Transverse colon (tissue), 4 donors: ENCODE measurements at regions of chr11 and their contacts with region 1.

Region 1: GRCh38 chr11:69654569-69655327 is 13.8 kb downstream of the CCND1 start:
- DNase-seq: no peak
- H3K4me3 ChIP-seq: no peak overlapping the region
- H3K27ac ChIP-seq: no peak overlapping the region
- H3K4me1 ChIP-seq: peaks cover 0 to 5% (median 0%) of the 10 kb centered on the region in 4 donors
- H3K27me3 ChIP-seq: no peaks in the 10 kb centered on the region
- CTCF ChIP-seq: no peak
- EP300 ChIP-seq: no peak
- POLR2A ChIP-seq: no peak

Region 2: GRCh38 chr11:69122642-69123431 is 531.9 kb before region 1 on chr11:
- in situ Hi-C with region 1: loop called in 2 of 4 experiments (anchors 10 to 25 kb)
- intact Hi-C with region 1: no loop called
- DNase-seq: peak; percentile 92
- H3K4me3 ChIP-seq: peak overlapping the region in 1 of 4 donors; percentile 6
- H3K27ac ChIP-seq: peak overlapping the region; percentile 34 to 65 (median 56)
- H3K4me1 ChIP-seq: peaks cover 17 to 20% (median 19%) of the 10 kb centered on the region in 4 donors
- H3K27me3 ChIP-seq: no peaks in the 10 kb centered on the region
- CTCF ChIP-seq: no peak
- EP300 ChIP-seq: peak; percentile 71
- POLR2A ChIP-seq: no peak

Region 3: DNA sequence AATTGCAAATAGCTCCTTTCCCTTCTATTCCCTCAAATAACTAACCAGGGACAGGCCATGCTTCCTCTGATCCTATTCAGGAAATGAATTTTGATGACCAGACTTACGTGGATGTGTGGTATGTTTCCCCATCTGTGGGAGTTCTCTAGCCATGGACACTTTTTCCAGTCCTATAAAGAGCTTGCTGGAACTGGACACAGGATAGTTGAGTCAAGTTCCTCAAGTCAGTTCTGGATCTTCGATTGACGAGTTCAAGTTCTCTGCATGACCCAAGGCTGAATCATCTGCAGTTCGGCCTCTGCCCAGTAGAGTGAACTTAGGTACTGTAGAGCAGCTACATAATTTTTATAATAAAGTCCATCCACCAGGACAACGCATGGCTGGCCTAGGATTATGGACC is 66.5 kb before region 1 on chr11:
- in situ Hi-C with region 1: no loop called
- intact Hi-C with region 1: no loop called
- DNase-seq: no peak
- H3K4me3 ChIP-seq: no peak overlapping the region
- H3K27ac ChIP-seq: no peak overlapping the region
- H3K4me1 ChIP-seq: no peaks in the 10 kb centered on the region
- H3K27me3 ChIP-seq: no peaks in the 10 kb centered on the region
- CTCF ChIP-seq: no peak
- EP300 ChIP-seq: no peak
- POLR2A ChIP-seq: no peak